A673 (cell line): ENCODE measurements at regions of chrX and their contacts with region 1.

Region 1: DNA sequence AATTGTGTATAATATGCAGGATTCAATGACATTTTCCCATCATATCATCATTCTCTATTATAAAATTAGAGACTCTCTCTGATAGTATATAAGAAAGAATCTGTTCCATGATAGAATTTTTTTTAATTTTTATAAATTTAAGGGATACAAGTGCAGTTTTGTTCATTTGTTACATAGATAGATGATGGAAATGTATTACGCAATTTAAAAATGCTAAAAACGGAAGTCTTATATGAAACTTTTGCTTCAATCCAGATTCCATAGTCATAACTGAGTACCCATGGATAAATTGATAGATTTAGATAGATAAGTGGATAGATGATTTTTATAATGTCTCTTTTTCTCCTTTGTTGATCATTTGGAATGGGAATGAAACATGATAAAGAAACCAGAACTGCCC is 24.9 kb upstream of the MAGEB2 start:
- DNase-seq: no peak
- H3K4me3 ChIP-seq: no peak overlapping the region
- H3K27ac ChIP-seq: no peak overlapping the region
- H3K4me1 ChIP-seq: no peaks in the 10 kb centered on the region
- H3K27me3 ChIP-seq: no peaks in the 10 kb centered on the region
- CTCF ChIP-seq: no peak

Region 2: DNA sequence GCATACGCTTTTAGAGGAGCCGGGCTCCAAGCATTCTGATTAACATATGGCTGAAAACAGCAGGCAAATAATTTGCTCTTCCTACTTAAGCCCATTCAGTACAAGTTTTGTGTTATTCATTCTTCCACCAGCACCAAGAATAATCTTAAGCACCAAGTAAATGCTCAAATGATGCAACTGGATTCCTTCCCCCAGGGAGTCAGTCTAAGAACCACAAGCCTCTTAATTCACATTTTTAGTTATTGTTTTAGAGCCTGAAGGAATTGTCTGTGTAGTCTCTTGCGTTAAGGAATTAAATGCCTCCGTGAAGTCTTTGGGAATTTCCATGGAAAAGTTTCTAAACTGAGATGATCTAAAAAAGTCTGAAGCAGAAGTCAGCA is 36.6 kb before region 1 on chrX:
- CTCF ChIA-PET with region 1: no interaction called
- POLR2A ChIA-PET with region 1: no interaction called
- intact Hi-C with region 1: loop called (anchors 5 kb)
- DNase-seq: peak; percentile 78
- H3K4me3 ChIP-seq: no peak overlapping the region
- H3K27ac ChIP-seq: peak overlapping the region; percentile 25
- H3K4me1 ChIP-seq: peaks cover 24% of the 10 kb centered on the region
- H3K27me3 ChIP-seq: no peaks in the 10 kb centered on the region
- CTCF ChIP-seq: no peak